CD4-positive, alpha-beta memory T cell (primary cell): ENCODE measurements at regions of chr16 and their contacts with region 1.

Region 1: GRCh38 chr16:80591071-80591915 is 50.5 kb downstream of the DYNLRB2 start:
- DNase-seq: peak; percentile 66 to 82 (median 78)
- H3K4me3 ChIP-seq: peak overlapping the region in 1 of 2 donors; percentile 7
- H3K4me3 Mint-ChIP-seq: peak overlapping the region; percentile 3 to 82 (median 54)
- H3K27ac ChIP-seq: no peak overlapping the region
- H3K27ac Mint-ChIP-seq: peak overlapping the region in 6 of 7 donors; percentile 3 to 74 (median 66)
- H3K4me1 ChIP-seq: peaks cover 22% of the 10 kb centered on the region
- H3K4me1 Mint-ChIP-seq: peaks cover 20 to 37% (median 28%) of the 10 kb centered on the region in 4 donors
- H3K27me3 ChIP-seq: no peaks in the 10 kb centered on the region
- H3K27me3 Mint-ChIP-seq: peaks cover 9 to 17% of the 10 kb centered on the region in 2 donors

Region 2: DNA sequence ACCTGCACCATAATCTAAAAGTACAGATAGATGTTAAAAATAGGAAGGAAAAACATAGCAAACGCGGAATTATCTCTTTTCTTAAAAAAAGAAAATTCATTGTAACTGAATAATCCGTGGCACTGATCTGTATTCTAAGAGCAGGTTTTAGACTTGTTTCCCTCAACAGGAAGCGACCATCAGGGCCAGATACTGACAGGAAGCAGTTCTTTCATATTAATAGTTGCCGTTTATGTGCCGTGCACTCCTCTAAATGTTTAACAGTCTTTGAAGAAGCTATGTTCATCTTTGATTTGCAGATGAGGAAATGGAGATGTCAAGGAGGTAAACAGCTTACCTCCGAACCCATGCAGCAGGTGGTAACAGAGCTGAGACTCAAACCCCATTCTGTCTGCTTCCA is 26.9 kb before region 1 on chr16:
- CTCF ChIA-PET with region 1: interaction called, 3 read pairs
- POLR2A ChIA-PET with region 1: interaction called, 10 read pairs
- intact Hi-C with region 1: no loop called
- DNase-seq: peak in 1 of 5 donors; percentile 10
- H3K4me3 ChIP-seq: peak overlapping the region in 1 of 2 donors; percentile 22
- H3K4me3 Mint-ChIP-seq: peak overlapping the region in 7 of 8 donors; percentile 26 to 62 (median 41)
- H3K27ac ChIP-seq: no peak overlapping the region
- H3K27ac Mint-ChIP-seq: peak overlapping the region; percentile 13 to 88 (median 65)
- H3K4me1 ChIP-seq: peaks cover 21% of the 10 kb centered on the region
- H3K4me1 Mint-ChIP-seq: peaks cover 12 to 23% (median 22%) of the 10 kb centered on the region in 4 donors
- H3K27me3 ChIP-seq: no peaks in the 10 kb centered on the region
- H3K27me3 Mint-ChIP-seq: peaks cover 0 to 2% of the 10 kb centered on the region in 2 donors

Region 3: DNA sequence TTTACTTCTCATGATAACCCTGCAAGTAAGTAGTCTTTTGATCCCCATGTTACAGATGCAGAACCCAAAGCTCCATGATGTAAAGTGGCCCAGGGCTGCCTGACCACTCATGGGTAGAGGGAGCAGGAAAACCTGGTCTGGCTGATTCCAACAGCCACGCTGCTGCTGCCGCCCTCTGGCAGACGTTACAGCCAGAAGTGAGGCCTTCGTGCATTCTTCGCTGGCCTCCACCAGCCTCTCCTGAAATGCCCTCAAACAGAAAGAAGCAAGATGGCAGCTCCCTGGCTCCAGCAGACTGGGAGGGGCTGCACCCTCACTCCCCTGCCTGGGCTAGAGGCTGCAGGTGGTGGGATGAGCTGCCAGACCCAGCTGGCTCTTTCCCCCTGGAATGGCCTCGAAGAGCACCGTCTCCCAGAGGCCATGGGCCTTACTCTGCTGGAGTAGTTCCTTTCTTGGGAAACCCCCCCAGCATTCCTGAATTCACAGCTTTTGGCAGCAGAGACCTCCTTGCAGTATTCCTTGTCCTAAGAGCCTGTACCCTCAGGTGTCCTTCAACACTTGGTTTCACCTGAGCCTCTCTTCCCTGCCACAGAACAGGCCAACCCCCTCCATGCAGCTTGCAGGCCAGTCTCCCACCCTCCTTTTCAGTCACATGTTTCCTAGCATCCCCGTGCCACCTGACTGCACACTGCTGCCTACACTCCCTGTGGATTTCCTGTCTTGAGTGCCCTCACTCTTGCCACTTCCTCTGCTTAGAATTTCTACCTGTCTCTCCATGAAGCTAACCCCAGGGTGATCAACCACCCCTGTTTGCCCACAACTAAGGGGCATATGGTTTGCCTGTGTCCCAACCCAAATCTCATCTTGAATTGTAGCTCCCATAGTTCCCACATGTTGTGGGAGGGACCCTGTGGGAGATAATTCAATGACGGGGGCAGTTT is 14.8 kb after region 1 on chr16:
- CTCF ChIA-PET with region 1: no interaction called
- POLR2A ChIA-PET with region 1: interaction called, 3 read pairs
- intact Hi-C with region 1: loop called (anchors 2 kb)
- DNase-seq: no peak
- H3K4me3 ChIP-seq: no peak overlapping the region
- H3K4me3 Mint-ChIP-seq: peak overlapping the region in 4 of 8 donors; percentile 27 to 51 (median 42)
- H3K27ac ChIP-seq: no peak overlapping the region
- H3K27ac Mint-ChIP-seq: peak overlapping the region in 3 of 7 donors; percentile 5 to 61 (median 52)
- H3K4me1 ChIP-seq: peaks cover 12% of the 10 kb centered on the region
- H3K4me1 Mint-ChIP-seq: peaks cover 8 to 12% (median 12%) of the 10 kb centered on the region in 4 donors
- H3K27me3 ChIP-seq: no peaks in the 10 kb centered on the region
- H3K27me3 Mint-ChIP-seq: no peaks in the 10 kb centered on the region

Region 4: DNA sequence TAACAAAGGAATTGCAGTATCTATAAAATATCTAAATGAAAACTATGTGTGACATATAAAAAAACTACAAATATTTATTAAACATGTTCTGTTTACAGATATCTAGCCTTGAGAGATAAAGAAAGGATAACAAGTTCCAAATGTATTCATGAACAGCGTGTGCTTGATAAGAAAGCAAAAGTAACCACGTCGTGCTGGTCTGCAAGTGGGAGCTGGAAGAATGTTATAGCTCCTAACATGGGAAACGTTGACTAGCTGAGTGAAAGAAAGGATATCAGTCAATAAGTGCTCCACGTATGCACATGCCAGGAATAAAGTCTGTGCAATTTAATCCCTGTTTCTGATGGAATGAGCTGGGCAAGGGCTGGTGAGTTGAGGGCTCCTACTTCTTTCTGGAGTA is 284.3 kb after region 1 on chr16:
- CTCF ChIA-PET with region 1: no interaction called
- POLR2A ChIA-PET with region 1: no interaction called
- intact Hi-C with region 1: no loop called
- DNase-seq: no peak
- H3K4me3 ChIP-seq: no peak overlapping the region
- H3K4me3 Mint-ChIP-seq: no peak overlapping the region
- H3K27ac ChIP-seq: no peak overlapping the region
- H3K27ac Mint-ChIP-seq: no peak overlapping the region
- H3K4me1 ChIP-seq: no peaks in the 10 kb centered on the region
- H3K4me1 Mint-ChIP-seq: no peaks in the 10 kb centered on the region
- H3K27me3 ChIP-seq: no peaks in the 10 kb centered on the region
- H3K27me3 Mint-ChIP-seq: peaks cover 10 to 12% of the 10 kb centered on the region in 2 donors